Activated T-helper 2 cell treated with anti-CD3 and anti-CD28 coated beads, Interferon-gamma antibody, Interleukin-2, Interleukin-4, amounts not matched to agents 10 μg/mL and 5 μg/mL and 100 μg/mL, durations not matched to agents 14 hours and 24 hours and 36 hours (primary cell): ENCODE measurements at regions of chr12 and their contacts with region 1.

Region 1: GRCh38 chr12:546921-547845 is 87.4 kb downstream of the B4GALNT3 start:
- DNase-seq: peak; percentile 57
- H3K4me3 Mint-ChIP-seq: no peak overlapping the region
- H3K27ac Mint-ChIP-seq: no peak overlapping the region
- H3K4me1 Mint-ChIP-seq: peaks cover 24% of the 10 kb centered on the region
- H3K27me3 Mint-ChIP-seq: peaks cover 7% of the 10 kb centered on the region

Region 2: DNA sequence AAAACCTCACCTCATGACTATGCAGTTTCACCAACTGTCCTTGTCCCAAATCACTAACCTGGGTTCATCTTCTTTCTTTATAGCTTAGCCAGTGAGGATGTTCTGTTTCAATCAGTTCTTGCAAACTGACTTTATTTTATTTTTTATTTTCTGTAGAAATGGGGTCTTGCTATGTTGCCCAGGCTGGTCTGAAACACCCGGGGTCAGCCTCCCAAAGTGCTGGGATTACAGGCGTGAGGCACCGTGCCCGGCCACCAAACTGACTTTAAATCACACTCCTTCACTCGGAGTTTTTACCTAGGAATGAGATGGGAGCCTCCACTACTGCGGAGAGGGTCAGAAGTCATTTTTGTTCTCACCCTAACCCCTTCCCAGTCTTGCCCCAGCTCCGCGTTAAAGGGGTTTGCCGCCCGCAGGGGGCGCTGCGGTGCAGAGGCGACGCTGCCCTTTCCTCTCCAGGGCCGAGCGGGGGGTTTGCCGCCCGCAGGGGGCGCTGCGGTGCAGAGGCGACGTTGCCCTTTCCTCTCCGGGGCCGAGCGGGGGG is 94.4 kb before region 1 on chr12:
- intact Hi-C with region 1: loop called (anchors 1 kb)
- DNase-seq: peak; percentile 69
- H3K4me3 Mint-ChIP-seq: no peak overlapping the region
- H3K27ac Mint-ChIP-seq: no peak overlapping the region
- H3K4me1 Mint-ChIP-seq: no peaks in the 10 kb centered on the region
- H3K27me3 Mint-ChIP-seq: peaks cover 21% of the 10 kb centered on the region